ENCODE measurements at regions of chr15 and their contacts with region 1.

Region 1: GRCh38 chr15:34927726-34928125 is 41.8 kb downstream of the AQR start:
- DNase-seq: no peak
- ATAC-seq: no peak
- H3K4me3 ChIP-seq: no peak overlapping the region
- H3K27ac ChIP-seq: no peak overlapping the region
- H3K4me1 ChIP-seq: no peaks in the 10 kb centered on the region
- H3K27me3 ChIP-seq: no peaks in the 10 kb centered on the region
- CTCF ChIP-seq: no peak
- POLR2A ChIP-seq: no peak

Region 2: GRCh38 chr15:34616613-34617012 is 311.1 kb before region 1 on chr15:
- in situ Hi-C with region 1: loop called in 3 of 4 experiments (anchors 10 to 25 kb)
- intact Hi-C with region 1: no loop called
- DNase-seq: no peak
- ATAC-seq: peak; percentile 68 to 96
- H3K4me3 ChIP-seq: no peak overlapping the region
- H3K27ac ChIP-seq: no peak overlapping the region
- H3K4me1 ChIP-seq: peaks cover 0 to 12% of the 10 kb centered on the region in 2 donors
- H3K27me3 ChIP-seq: peaks cover 0 to 3% (median 0%) of the 10 kb centered on the region in 3 donors
- CTCF ChIP-seq: no peak
- POLR2A ChIP-seq: no peak

Region 3: GRCh38 chr15:34621675-34622074 is 306.1 kb before region 1 on chr15:
- in situ Hi-C with region 1: loop called in 3 of 4 experiments (anchors 10 to 25 kb)
- intact Hi-C with region 1: no loop called
- DNase-seq: no peak
- ATAC-seq: no peak
- H3K4me3 ChIP-seq: no peak overlapping the region
- H3K27ac ChIP-seq: no peak overlapping the region
- H3K4me1 ChIP-seq: peaks cover 0 to 16% of the 10 kb centered on the region in 2 donors
- H3K27me3 ChIP-seq: peaks cover 0 to 5% (median 0%) of the 10 kb centered on the region in 3 donors
- CTCF ChIP-seq: peak in 3 of 5 experiments; percentile 27 to 56 (median 34)
- POLR2A ChIP-seq: no peak

Region 4: GRCh38 chr15:34708422-34708821 is 219.3 kb before region 1 on chr15:
- in situ Hi-C with region 1: loop called in 1 of 4 experiments (anchors 10 kb)
- intact Hi-C with region 1: no loop called
- DNase-seq: no peak
- ATAC-seq: peak in 1 of 2 donors; percentile 54
- H3K4me3 ChIP-seq: no peak overlapping the region
- H3K27ac ChIP-seq: no peak overlapping the region
- H3K4me1 ChIP-seq: no peaks in the 10 kb centered on the region
- H3K27me3 ChIP-seq: no peaks in the 10 kb centered on the region
- CTCF ChIP-seq: peak; percentile 29 to 70 (median 62)
- POLR2A ChIP-seq: no peak

Region 5: GRCh38 chr15:34810455-34811146 is 117.1 kb before region 1 on chr15:
- in situ Hi-C with region 1: no loop called
- intact Hi-C with region 1: no loop called
- DNase-seq: peak in 1 of 2 donors; percentile 34
- ATAC-seq: peak; percentile 74 to 85
- H3K4me3 ChIP-seq: no peak overlapping the region
- H3K27ac ChIP-seq: peak overlapping the region; percentile 53 to 76 (median 55)
- H3K4me1 ChIP-seq: peaks cover 0 to 8% of the 10 kb centered on the region in 2 donors
- H3K27me3 ChIP-seq: peaks cover 0 to 2% (median 0%) of the 10 kb centered on the region in 3 donors
- CTCF ChIP-seq: no peak
- POLR2A ChIP-seq: peak in 1 of 2 donors; percentile 12